ENCODE measurements at regions of chr11 and their contacts with region 1.

Region 1: DNA sequence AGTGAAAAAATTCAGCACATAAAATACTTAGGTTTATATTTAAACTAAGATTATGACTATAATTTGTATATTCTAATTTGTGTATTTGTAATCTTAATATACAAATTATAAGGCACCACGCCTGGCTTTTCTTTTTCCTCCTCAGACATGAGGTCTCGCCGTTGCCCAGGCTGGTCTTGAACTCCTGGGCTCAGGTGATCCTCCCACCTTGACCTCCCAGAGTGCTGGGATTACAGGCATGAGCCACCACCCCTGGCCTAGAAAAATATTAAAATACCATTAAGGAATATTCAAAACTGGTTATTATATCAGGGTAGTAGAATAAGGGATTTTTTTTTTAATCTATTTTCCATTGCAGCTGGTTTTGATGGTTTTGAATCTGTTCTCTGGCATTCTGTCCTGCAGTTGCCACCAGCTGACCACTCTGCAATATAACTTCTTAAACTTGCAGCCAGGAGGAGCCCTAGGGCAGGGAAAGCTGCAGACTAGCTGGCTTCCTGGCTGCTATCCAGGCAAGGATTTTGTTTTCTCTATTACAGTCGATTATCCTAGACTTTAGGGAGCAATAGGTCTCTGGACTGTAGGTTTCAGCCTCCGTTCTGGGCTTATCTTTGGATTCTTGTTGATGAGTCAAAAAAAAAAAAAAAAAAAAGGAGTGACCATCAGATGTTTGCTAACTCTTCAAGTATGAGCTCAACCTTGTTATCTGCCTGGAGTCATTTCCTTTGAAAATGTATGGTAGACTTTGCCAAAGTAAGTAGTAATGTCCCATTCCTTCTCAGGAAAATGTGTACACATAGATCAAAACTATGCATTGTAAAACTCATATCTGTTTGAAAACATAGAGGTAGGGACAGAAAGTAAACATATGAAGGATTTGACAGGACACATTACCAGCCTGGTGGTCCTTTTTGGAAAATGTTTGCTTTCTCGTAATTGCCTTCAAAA is 13.2 kb downstream of the POLA2 start:
- DNase-seq: peak in 7 of 14 experiments; percentile 7 to 67 (median 46)
- ATAC-seq: no peak
- H3K4me3 ChIP-seq: no peak overlapping the region
- H3K4me3 Mint-ChIP-seq: no peak overlapping the region
- H3K27ac ChIP-seq: no peak overlapping the region
- H3K27ac Mint-ChIP-seq: no peak overlapping the region
- H3K4me1 ChIP-seq: no peaks in the 10 kb centered on the region
- H3K4me1 Mint-ChIP-seq: peaks cover 8% of the 10 kb centered on the region
- H3K27me3 ChIP-seq: no peaks in the 10 kb centered on the region
- H3K27me3 Mint-ChIP-seq: no peaks in the 10 kb centered on the region
- CTCF ChIP-seq: peak; percentile 57

Region 2: GRCh38 chr11:65136515-65137096 is 138.4 kb before region 1 on chr11:
- CTCF ChIA-PET with region 1: no interaction called
- POLR2A ChIA-PET with region 1: no interaction called
- intact Hi-C with region 1: no loop called
- DNase-seq: no peak
- ATAC-seq: no peak
- H3K4me3 ChIP-seq: no peak overlapping the region
- H3K4me3 Mint-ChIP-seq: peak overlapping the region; percentile 80
- H3K27ac ChIP-seq: peak overlapping the region in 1 of 2 donors; percentile 99
- H3K27ac Mint-ChIP-seq: peak overlapping the region; percentile 100
- H3K4me1 ChIP-seq: peaks cover 44% of the 10 kb centered on the region
- H3K4me1 Mint-ChIP-seq: peaks cover 41% of the 10 kb centered on the region
- H3K27me3 ChIP-seq: no peaks in the 10 kb centered on the region
- H3K27me3 Mint-ChIP-seq: no peaks in the 10 kb centered on the region
- CTCF ChIP-seq: no peak

Region 3: DNA sequence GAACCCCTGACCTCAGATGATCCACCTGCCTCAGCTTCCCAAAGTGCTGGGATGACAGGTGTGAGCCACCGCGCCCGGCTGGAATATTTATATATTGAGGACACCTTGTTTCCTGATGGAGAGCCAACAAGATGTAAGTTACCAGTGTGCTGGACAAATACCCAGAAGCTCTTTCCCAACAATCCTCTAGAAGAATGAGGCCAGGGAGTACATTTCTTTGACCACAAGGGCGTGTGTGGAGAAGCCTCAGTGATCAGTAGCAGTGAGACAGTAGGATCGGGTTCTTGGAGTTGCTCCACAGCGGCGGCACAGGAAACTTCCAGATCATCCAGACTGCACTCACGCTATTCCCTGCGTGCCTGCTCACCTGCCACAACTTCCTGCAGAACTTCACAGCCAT is 23.5 kb before region 1 on chr11:
- CTCF ChIA-PET with region 1: no interaction called
- POLR2A ChIA-PET with region 1: no interaction called
- intact Hi-C with region 1: loop called in 1 of 2 experiments (anchors 2 kb)
- DNase-seq: no peak
- ATAC-seq: no peak
- H3K4me3 ChIP-seq: no peak overlapping the region
- H3K4me3 Mint-ChIP-seq: no peak overlapping the region
- H3K27ac ChIP-seq: no peak overlapping the region
- H3K27ac Mint-ChIP-seq: no peak overlapping the region
- H3K4me1 ChIP-seq: no peaks in the 10 kb centered on the region
- H3K4me1 Mint-ChIP-seq: no peaks in the 10 kb centered on the region
- H3K27me3 ChIP-seq: no peaks in the 10 kb centered on the region
- H3K27me3 Mint-ChIP-seq: peaks cover 9% of the 10 kb centered on the region
- CTCF ChIP-seq: no peak

Region 4: GRCh38 chr11:65471410-65471762 is 196.4 kb after region 1 on chr11:
- CTCF ChIA-PET with region 1: no interaction called
- POLR2A ChIA-PET with region 1: no interaction called
- intact Hi-C with region 1: loop called in 1 of 2 experiments (anchors 5 kb)
- DNase-seq: peak in 5 of 14 experiments; percentile 15 to 64 (median 32)
- ATAC-seq: no peak
- H3K4me3 ChIP-seq: peak overlapping the region; percentile 3
- H3K4me3 Mint-ChIP-seq: no peak overlapping the region
- H3K27ac ChIP-seq: peak overlapping the region; percentile 72 to 76
- H3K27ac Mint-ChIP-seq: peak overlapping the region; percentile 92
- H3K4me1 ChIP-seq: peaks cover 26% of the 10 kb centered on the region
- H3K4me1 Mint-ChIP-seq: peaks cover 16% of the 10 kb centered on the region
- H3K27me3 ChIP-seq: no peaks in the 10 kb centered on the region
- H3K27me3 Mint-ChIP-seq: no peaks in the 10 kb centered on the region
- CTCF ChIP-seq: no peak

Measured in CD4-positive, alpha-beta T cell (primary cell).